ENCODE measurements at regions of chr16 and their contacts with region 1.

Region 1: DNA sequence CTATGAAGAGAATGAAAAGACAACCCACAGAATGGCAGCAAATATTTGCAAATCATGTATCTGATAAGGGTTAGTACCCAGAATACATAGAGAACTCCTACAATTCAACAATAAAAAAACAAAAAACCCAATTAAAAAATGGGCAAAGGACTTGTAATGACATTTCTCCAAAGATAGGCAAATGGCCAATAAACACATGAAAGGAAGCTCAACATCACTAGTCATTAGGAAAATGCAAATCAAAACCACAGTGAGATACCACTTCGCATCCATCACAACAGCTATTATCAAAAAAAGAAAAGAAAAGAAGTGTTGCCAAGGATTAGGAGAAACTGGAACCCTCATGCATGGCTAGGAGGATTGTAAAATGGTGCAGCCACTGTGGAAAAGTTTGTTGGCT is 45.1 kb upstream of the ARL6IP1 start:
- DNase-seq: no peak
- ATAC-seq: no peak
- H3K4me3 ChIP-seq: no peak overlapping the region
- H3K4me3 Mint-ChIP-seq: no peak overlapping the region
- H3K27ac ChIP-seq: no peak overlapping the region
- H3K27ac Mint-ChIP-seq: no peak overlapping the region
- H3K4me1 ChIP-seq: no peaks in the 10 kb centered on the region
- H3K4me1 Mint-ChIP-seq: no peaks in the 10 kb centered on the region
- H3K27me3 ChIP-seq: no peaks in the 10 kb centered on the region
- H3K27me3 Mint-ChIP-seq: no peaks in the 10 kb centered on the region
- CTCF ChIP-seq: no peak

Region 2: GRCh38 chr16:18809165-18809564 is 37.3 kb before region 1 on chr16:
- CTCF ChIA-PET with region 1: no interaction called
- POLR2A ChIA-PET with region 1: no interaction called
- intact Hi-C with region 1: loop called in 1 of 2 experiments (anchors 5 kb)
- DNase-seq: no peak
- ATAC-seq: no peak
- H3K4me3 ChIP-seq: no peak overlapping the region
- H3K4me3 Mint-ChIP-seq: no peak overlapping the region
- H3K27ac ChIP-seq: no peak overlapping the region
- H3K27ac Mint-ChIP-seq: no peak overlapping the region
- H3K4me1 ChIP-seq: peaks cover 3% of the 10 kb centered on the region
- H3K4me1 Mint-ChIP-seq: peaks cover 4% of the 10 kb centered on the region
- H3K27me3 ChIP-seq: no peaks in the 10 kb centered on the region
- H3K27me3 Mint-ChIP-seq: no peaks in the 10 kb centered on the region
- CTCF ChIP-seq: no peak